ENCODE measurements at regions of chr20 and their contacts with region 1.

Region 1: DNA sequence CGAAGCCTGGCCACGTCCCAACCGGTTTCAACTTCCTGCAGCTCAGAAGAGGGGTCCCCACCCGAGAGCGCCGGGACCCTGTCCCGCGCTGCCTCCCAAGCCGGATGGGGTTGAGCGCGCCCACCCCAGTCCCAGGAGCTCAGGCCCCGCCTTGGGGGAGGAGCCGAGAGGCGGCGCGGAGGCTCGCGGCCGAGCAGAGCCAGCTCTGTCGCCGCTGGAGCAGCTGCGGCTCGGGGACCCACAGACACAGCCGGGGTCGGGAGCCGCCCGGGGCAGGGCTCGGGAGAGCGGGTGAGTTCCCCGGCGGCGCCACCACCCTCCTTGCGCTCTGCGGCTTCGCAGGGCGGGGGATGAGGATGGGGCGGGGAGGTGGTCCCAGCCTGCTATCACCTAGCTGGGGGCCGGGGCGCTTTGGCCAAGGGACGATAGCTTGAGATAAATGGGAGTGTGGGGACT is at the start of gene PPP1R16B:
- DNase-seq: peak; percentile 80
- ATAC-seq: peak; percentile 77
- H3K4me3 Mint-ChIP-seq: peak within 1 kb of the TSS; percentile 93
- H3K27ac Mint-ChIP-seq: peak within 1 kb of the TSS; percentile 91
- H3K4me1 Mint-ChIP-seq: peaks cover 51% of the 10 kb centered on the region
- H3K27me3 Mint-ChIP-seq: no peaks in the 10 kb centered on the region
- CTCF ChIP-seq: no peak
- total RNA-seq, gene PPP1R16B: 98.3 and 99.3 TPM in 2 replicates

Region 2: DNA sequence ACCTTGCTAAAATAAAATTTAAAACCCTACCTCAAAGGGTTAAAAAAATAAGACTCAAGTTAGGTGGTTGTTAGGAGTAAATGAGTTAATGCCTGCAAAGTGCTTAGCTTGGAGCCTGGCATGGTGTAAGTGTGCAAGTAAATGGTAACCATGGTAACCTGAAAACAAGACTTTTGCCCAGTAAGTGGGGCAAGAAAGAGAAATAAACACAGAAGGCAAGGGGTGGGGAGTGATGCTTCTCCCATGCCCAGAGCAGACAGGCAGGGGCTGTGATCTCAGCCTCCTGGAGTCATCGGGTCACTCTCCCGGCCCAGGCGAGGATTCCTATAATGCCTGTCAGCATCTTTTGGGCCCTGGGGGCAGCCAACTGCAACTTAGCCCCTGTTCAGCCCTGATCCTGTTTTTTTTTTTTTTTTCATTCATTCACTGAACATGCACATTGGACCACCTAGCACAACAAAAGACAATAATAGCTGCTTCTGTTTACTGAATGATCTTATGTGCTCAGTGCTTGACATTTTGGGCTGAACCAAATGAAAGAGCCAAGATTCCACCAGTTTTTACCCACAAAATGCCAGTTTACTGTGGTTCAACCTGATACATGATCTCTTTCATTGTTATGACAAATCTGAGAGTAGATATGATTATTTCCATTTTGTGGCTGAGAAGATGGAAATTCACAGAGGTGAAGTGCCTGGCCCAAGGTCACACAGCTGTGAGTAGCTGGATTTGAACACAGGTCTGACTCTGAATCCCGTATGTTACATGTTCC is 140.2 kb before region 1 on chr20:
- CTCF ChIA-PET with region 1: no interaction called
- POLR2A ChIA-PET with region 1: no interaction called
- intact Hi-C with region 1: no loop called
- DNase-seq: no peak
- ATAC-seq: no peak
- H3K4me3 Mint-ChIP-seq: no peak overlapping the region
- H3K27ac Mint-ChIP-seq: no peak overlapping the region
- H3K4me1 Mint-ChIP-seq: no peaks in the 10 kb centered on the region
- H3K27me3 Mint-ChIP-seq: peaks cover 48% of the 10 kb centered on the region
- CTCF ChIP-seq: no peak

Region 3: DNA sequence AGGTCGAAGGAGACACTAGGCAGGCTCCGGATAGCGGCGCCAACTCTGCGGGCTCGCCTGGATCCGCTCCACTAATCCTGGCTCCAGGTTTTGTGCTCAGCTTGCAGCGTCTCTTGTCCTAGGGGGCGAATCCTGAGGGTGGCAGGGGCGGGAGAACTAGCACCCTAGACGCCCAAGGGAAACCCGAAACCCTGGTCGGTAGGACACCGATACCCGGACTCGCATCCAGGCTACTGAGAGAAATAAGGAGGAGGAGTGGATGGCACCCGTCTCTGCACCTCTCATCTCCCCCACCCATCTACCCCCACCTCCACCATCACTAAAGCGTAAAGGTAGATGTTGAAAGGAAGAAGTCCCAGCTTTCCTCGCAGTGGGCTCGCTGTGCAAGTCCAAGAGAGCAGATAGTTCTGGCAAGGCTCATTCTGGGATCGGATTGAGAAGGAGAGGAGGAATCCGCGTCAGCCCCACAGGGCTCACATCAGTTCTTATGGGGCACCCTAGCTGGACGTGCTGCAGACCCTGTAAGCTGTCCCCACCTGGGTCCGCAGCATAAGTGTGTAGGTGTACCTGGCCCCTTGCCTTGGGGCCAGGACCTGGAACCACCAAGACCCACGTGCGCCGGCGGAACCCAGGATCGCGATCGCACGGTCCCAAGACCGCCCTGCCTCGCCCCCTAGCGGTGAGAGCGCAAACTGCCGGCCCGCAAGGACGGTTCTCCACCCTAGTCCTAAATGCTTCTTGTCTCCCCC is 74.4 kb before region 1 on chr20:
- CTCF ChIA-PET with region 1: interaction called, 6 read pairs
- POLR2A ChIA-PET with region 1: interaction called, 3 read pairs
- intact Hi-C with region 1: loop called (anchors 5 kb)
- DNase-seq: peak; percentile 68
- ATAC-seq: peak; percentile 76
- H3K4me3 Mint-ChIP-seq: peak overlapping the region; percentile 65
- H3K27ac Mint-ChIP-seq: no peak overlapping the region
- H3K4me1 Mint-ChIP-seq: peaks cover 52% of the 10 kb centered on the region
- H3K27me3 Mint-ChIP-seq: peaks cover 88% of the 10 kb centered on the region
- CTCF ChIP-seq: peak; percentile 77

Region 4: DNA sequence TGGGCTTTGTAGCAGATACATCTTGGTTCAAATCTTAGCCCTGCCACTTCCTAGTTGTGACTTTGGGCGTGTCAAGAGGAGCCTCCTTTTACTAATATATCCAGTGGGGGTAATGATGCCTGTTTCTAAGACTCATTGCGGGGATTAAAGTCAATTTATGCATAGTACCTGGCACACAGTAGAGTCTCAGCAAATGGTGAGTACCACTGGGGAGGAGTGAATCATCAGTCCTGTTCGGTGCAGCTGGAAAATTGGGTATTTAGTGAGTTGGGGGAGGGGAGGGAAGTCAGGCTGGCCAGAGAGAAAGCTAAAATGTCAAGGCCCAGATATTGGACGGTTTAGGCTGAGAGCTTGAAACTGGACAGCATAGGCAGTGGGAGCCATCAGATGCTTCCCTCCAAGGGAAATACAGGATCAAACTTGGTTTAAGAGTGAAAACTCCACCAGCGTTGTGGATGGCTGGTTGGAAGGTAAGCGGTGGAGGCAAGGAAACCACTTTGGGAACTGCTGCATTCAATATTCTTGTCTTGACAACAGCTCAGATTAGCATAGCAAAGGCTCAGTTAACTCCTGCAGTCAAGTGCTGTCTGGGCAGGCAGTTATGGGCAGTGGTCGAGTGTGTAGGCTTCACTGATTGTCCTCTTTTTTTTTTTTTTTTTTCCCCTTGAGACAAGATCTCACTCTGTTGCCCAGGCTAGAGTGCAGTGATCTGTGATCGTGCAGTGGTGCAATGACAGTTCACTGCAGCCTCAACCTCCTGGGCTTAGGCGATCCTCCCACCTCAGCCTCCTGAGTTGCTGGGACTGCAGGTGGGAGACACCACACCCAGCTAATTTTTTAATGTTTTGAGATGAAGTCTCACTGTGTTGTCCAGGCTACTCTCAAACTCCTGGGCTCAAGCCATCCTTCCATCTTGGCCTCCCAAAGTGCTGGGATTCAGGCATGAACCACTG is 12.9 kb after region 1 on chr20:
- CTCF ChIA-PET with region 1: interaction called, 5 read pairs
- POLR2A ChIA-PET with region 1: interaction called, 19 read pairs
- intact Hi-C with region 1: loop called (anchors 2 kb)
- DNase-seq: no peak
- ATAC-seq: no peak
- H3K4me3 Mint-ChIP-seq: no peak overlapping the region
- H3K27ac Mint-ChIP-seq: peak overlapping the region; percentile 85
- H3K4me1 Mint-ChIP-seq: peaks cover 76% of the 10 kb centered on the region
- H3K27me3 Mint-ChIP-seq: no peaks in the 10 kb centered on the region
- CTCF ChIP-seq: no peak

Region 5: DNA sequence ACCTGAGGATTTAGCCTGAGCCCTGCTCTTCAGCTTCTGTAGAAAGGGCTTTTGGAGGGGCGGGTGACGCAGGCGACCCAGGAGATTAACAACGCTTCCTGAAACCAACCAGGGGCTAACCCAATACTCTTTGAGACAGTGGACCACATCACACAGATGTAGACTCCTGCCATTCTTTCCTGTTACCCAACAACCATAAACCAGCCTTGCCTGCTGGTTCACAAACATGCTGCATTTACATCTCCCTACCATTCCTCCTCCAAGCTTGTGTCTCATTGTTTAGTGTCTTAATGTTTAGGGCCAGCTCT is 28.3 kb after region 1 on chr20:
- CTCF ChIA-PET with region 1: interaction called, 4 read pairs
- POLR2A ChIA-PET with region 1: interaction called, 140 read pairs
- intact Hi-C with region 1: no loop called
- DNase-seq: no peak
- ATAC-seq: peak; percentile 80
- H3K4me3 Mint-ChIP-seq: peak overlapping the region; percentile 30
- H3K27ac Mint-ChIP-seq: peak overlapping the region; percentile 82
- H3K4me1 Mint-ChIP-seq: peaks cover 76% of the 10 kb centered on the region
- H3K27me3 Mint-ChIP-seq: no peaks in the 10 kb centered on the region
- CTCF ChIP-seq: no peak

Region 6: DNA sequence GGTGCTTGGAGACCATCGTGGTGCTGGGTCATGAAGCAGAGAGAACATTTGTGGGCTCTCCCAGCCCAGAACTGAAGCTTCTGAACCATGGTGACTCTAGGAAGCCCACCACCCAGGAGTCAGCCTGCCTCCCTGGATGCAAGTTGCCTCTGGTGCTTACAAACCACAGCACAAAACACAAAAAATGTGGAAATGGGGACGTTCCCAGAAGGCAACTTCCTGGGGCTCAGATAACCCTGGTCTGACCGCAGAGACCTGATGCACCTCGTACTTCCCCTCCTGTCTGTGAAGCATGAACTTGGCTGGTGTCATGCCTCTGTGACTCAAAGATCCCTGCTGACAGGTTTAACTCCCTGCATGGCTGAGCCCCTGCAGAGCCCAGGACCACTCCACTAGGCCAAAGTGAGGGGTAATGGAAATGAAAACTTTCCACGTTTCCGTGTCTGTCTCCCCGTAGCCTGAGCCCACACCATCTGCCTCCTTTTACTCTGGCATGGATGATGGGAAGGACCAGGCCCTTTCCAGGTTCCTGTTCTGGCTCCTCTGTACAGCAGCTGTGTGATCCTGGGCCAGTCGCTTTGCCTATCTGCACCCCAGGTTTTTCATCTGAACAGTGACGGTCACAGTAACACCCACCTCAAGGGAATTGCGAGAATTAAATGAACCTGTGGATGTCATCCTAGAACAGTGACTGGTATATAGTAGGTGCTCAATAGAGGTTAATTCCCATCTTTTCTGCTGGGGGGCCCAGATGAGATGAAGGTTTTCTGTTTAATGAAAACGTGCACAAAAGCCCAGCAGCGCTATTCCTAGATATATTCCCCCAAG is 57.7 kb after region 1 on chr20:
- CTCF ChIA-PET with region 1: interaction called, 18 read pairs
- POLR2A ChIA-PET with region 1: interaction called, 82 read pairs
- intact Hi-C with region 1: loop called (anchors 1 kb)
- DNase-seq: peak; percentile 52
- ATAC-seq: peak; percentile 78
- H3K4me3 Mint-ChIP-seq: peak overlapping the region; percentile 76
- H3K27ac Mint-ChIP-seq: peak overlapping the region; percentile 95
- H3K4me1 Mint-ChIP-seq: peaks cover 94% of the 10 kb centered on the region
- H3K27me3 Mint-ChIP-seq: no peaks in the 10 kb centered on the region
- CTCF ChIP-seq: no peak

Region 7: GRCh38 chr20:38883081-38883980 is 77.8 kb after region 1 on chr20:
- CTCF ChIA-PET with region 1: interaction called, 9 read pairs
- POLR2A ChIA-PET with region 1: interaction called, 128 read pairs
- intact Hi-C with region 1: no loop called
- DNase-seq: no peak
- ATAC-seq: no peak
- H3K4me3 Mint-ChIP-seq: peak overlapping the region; percentile 24
- H3K27ac Mint-ChIP-seq: peak overlapping the region; percentile 91
- H3K4me1 Mint-ChIP-seq: peaks cover 92% of the 10 kb centered on the region
- H3K27me3 Mint-ChIP-seq: no peaks in the 10 kb centered on the region
- CTCF ChIP-seq: no peak

Measured in activated B cell treated with CpG ODN at 0.5 μM for 24 hours (primary cell).